HEK293 (cell line): ENCODE measurements at regions of chr2 and their contacts with region 1.

Region 1: GRCh38 chr2:237572021-237572741 is 5.8 kb downstream of the PRLH start:
- H3K4me3 ChIP-seq: no peak overlapping the region
- H3K27ac ChIP-seq: no peak overlapping the region
- H3K4me1 ChIP-seq: 0 out of 2 replicates have a peak, but pooled peaks cover 3% of the 10 kb centered on the region
- CTCF ChIP-seq: peak; percentile 99

Region 2: GRCh38 chr2:237122214-237122666 is 449.9 kb before region 1 on chr2:
- CTCF ChIA-PET with region 1: interaction called, 21 read pairs
- POLR2A ChIA-PET with region 1: no interaction called
- H3K4me3 ChIP-seq: no peak overlapping the region
- H3K27ac ChIP-seq: no peak overlapping the region
- H3K4me1 ChIP-seq: no peaks in the 10 kb centered on the region
- CTCF ChIP-seq: peak; percentile 36; the same call in 1 of the 2 replicates

Region 3: DNA sequence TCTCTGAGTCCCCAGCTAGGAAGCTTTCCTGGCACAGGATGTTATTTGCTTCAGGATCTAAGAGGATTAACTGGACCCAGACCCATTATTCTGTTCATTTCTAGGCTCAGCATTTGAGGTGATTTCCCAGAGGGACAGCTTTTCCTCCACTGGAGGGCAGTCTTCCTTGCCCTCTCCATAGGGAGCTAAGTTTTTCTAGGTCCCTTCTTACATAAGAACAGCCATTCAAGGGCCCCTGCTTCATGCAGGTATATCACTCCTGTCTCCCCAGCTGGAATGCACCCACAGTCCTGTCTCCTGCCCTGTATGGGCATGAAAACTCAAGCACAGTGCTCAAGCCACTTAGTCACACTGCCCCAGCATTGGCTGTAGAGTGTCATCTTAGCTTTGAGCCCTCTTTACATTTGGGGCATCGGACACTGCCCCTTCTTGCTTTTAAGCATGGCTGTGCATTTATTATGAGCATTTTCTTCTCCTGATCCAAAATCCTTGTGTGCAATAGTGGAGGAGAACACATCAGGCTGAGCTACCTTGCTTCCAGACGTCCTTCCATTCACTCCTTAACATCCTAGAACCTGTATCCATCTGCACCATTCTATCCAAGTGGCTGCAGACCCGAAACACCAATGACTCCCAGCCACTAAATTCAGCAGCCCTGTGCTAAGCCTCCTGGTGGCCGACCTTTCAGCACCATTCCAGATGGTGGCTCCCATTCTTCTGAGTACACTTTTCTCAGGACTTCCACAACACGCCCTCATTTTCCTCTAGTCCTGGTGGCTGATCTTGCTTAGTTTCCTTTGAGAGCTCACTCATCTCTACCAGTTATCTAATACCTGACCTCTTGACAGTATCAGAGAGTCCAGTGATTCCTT is 406.5 kb before region 1 on chr2:
- CTCF ChIA-PET with region 1: interaction called, 13 read pairs
- POLR2A ChIA-PET with region 1: no interaction called
- H3K4me3 ChIP-seq: no peak overlapping the region
- H3K27ac ChIP-seq: no peak overlapping the region
- H3K4me1 ChIP-seq: no peaks in the 10 kb centered on the region
- CTCF ChIP-seq: no peak

Region 4: DNA sequence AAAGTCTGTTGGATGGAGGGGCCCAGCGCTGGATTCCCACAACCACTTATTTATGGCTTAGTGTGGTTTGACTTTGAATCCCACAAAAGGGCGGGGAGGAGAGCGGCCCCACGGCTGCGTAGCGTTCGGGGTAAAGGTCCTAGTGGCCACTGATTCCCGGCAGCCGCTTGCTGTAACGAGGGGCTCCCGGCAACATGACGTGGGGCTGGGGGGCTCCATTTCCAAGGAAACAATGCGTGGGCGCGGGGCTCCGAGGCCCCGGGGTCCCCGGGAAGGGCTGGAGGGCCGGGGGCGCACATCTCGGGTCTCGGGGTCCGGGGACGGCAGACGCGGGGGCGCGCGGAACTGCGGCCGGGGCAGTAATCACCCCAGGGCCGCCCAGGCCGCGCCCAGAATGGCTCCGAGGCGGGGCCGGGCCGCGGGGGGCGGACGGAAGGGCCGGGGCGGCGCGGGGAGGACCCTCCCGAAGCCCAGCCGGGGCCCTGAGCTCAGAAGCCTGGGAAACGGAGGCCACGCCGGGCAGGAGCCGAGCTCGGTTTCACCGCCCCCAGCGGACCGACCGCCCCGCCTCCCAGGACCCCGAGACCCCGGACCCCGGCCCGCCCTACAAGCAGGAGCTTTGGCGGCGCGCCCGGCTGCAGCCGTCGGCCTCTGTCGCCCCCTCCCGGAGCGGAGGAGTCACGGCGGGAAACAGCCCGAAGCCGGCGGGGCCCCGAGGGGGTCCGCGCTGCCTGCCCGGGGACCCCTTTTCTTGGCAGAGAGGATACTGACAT is 97.1 kb before region 1 on chr2:
- CTCF ChIA-PET with region 1: interaction called, 10 read pairs
- POLR2A ChIA-PET with region 1: interaction called, 3 read pairs
- H3K4me3 ChIP-seq: peak overlapping the region; percentile 65
- H3K27ac ChIP-seq: peak overlapping the region; percentile 79
- H3K4me1 ChIP-seq: no peaks in the 10 kb centered on the region
- CTCF ChIP-seq: peak; percentile 81

Region 5: GRCh38 chr2:237530472-237531433 is 41.4 kb before region 1 on chr2:
- CTCF ChIA-PET with region 1: interaction called, 15 read pairs
- POLR2A ChIA-PET with region 1: no interaction called
- H3K4me3 ChIP-seq: no peak overlapping the region
- H3K27ac ChIP-seq: no peak overlapping the region
- H3K4me1 ChIP-seq: no peaks in the 10 kb centered on the region
- CTCF ChIP-seq: no peak

Region 6: GRCh38 chr2:237744613-237745249 is 172.6 kb after region 1 on chr2:
- CTCF ChIA-PET with region 1: interaction called, 24 read pairs
- POLR2A ChIA-PET with region 1: no interaction called
- H3K4me3 ChIP-seq: no peak overlapping the region
- H3K27ac ChIP-seq: no peak overlapping the region
- H3K4me1 ChIP-seq: peaks cover 6% of the 10 kb centered on the region; the same call in 1 of the 2 replicates
- CTCF ChIP-seq: peak; percentile 83